Sigmoid colon (tissue), 7 donors: ENCODE measurements at regions of chr2 and their contacts with region 1.

Region 1: GRCh38 chr2:20490260-20491181 is 43.6 kb downstream of the RHOB start:
- DNase-seq: peak; percentile 94
- H3K4me3 ChIP-seq: no peak overlapping the region
- H3K27ac ChIP-seq: peak overlapping the region in 3 of 4 donors; percentile 72 to 84 (median 83)
- H3K4me1 ChIP-seq: peaks cover 4 to 56% (median 44%) of the 10 kb centered on the region in 4 donors
- H3K27me3 ChIP-seq: no peaks in the 10 kb centered on the region
- CTCF ChIP-seq: no peak
- EP300 ChIP-seq: peak; percentile 83 to 95 (median 90)
- POLR2A ChIP-seq: no peak

Region 2: DNA sequence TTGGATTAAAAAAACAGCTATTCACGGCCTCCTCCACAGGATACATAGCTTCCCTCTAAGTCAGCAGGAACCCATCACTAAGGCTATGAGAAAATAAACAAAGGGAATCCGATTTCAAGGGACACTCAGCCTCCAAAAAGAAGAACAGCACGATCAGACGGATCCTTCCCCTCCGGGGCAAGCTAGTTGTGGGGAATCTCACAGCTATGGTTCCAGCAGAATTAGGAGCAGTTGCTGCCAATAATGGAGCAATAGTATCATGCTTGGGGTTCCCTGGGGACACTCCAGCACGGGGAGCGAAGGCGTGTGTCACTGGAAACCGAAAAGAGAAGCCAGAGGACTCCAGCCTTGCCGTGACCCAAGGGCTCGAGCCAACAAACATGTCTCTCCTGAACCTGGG is 751.8 kb before region 1 on chr2:
- intact Hi-C with region 1: no loop called
- DNase-seq: peak; percentile 87
- H3K4me3 ChIP-seq: no peak overlapping the region
- H3K27ac ChIP-seq: peak overlapping the region; percentile 35 to 59 (median 44)
- H3K4me1 ChIP-seq: peaks cover 0 to 17% (median 11%) of the 10 kb centered on the region in 4 donors
- H3K27me3 ChIP-seq: no peaks in the 10 kb centered on the region
- CTCF ChIP-seq: no peak
- EP300 ChIP-seq: no peak
- POLR2A ChIP-seq: no peak

Region 3: DNA sequence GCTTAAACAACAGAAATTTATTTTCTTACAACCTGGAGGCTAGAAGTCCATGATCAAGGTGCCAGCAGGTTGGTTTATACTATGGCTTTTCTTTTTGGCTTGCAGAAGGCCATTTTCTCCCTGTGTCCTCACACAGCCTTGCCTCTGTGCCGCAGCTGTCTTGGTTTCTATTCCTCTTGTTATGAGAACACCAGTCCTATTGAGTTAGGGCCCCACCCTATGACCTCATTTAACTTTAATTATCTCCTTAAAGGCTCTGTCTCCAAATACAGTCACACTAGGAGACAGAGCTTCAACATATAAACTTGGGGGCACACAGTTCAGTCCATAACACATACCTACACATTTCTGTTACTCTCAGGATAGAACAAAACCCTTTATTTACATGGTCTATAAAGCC is 61.0 kb before region 1 on chr2:
- intact Hi-C with region 1: no loop called
- DNase-seq: no peak
- H3K4me3 ChIP-seq: no peak overlapping the region
- H3K27ac ChIP-seq: peak overlapping the region; percentile 40 to 56 (median 50)
- H3K4me1 ChIP-seq: peaks cover 0 to 27% (median 23%) of the 10 kb centered on the region in 4 donors
- H3K27me3 ChIP-seq: no peaks in the 10 kb centered on the region
- CTCF ChIP-seq: no peak
- EP300 ChIP-seq: no peak
- POLR2A ChIP-seq: no peak

Region 4: GRCh38 chr2:20450204-20450999 is 40.1 kb before region 1 on chr2:
- intact Hi-C with region 1: loop called (anchors 2 kb)
- DNase-seq: peak; percentile 97
- H3K4me3 ChIP-seq: peak overlapping the region; percentile 61 to 100 (median 98)
- H3K27ac ChIP-seq: peak overlapping the region; percentile 93 to 98 (median 98)
- H3K4me1 ChIP-seq: peaks cover 0 to 36% (median 28%) of the 10 kb centered on the region in 4 donors
- H3K27me3 ChIP-seq: no peaks in the 10 kb centered on the region
- CTCF ChIP-seq: peak in 1 of 4 experiments; percentile 7
- EP300 ChIP-seq: peak in 3 of 4 donors; percentile 96 to 97 (median 97)
- POLR2A ChIP-seq: peak; percentile 57 to 60

Region 5: DNA sequence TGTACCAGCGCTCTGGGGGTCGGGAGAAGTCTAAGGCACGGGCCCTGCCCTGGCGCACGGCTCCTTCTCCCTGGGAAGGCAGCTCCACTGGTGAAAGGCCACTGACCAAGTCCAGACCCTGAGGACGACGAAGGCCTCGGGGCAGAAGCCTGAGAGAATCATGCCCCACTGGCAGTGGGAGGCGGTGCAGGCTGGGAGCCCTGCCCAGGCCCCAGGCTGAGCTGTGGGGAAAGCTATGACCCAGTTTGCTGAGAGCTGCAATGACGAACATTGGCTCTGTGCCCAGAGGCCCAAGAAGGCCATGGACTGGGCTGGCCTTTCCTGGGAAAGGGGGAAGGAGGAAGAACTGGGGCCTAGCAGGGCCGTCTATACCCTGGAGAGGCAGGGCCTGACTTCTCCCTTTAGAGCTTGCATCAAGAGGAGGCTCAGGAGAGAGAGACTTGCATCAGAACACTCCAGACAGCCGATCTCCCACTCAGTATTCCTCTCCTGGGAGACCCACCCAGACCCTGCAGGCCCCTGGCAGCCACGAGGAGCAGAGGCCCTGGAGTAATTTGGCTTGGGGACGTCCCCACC is 127.5 kb after region 1 on chr2:
- intact Hi-C with region 1: loop called (anchors 1 kb)
- DNase-seq: peak; percentile 100
- H3K4me3 ChIP-seq: no peak overlapping the region
- H3K27ac ChIP-seq: peak overlapping the region; percentile 96 to 98 (median 98)
- H3K4me1 ChIP-seq: peaks cover 0 to 94% (median 86%) of the 10 kb centered on the region in 4 donors
- H3K27me3 ChIP-seq: no peaks in the 10 kb centered on the region
- CTCF ChIP-seq: peak; percentile 69 to 82 (median 71)
- EP300 ChIP-seq: peak; percentile 94 to 99 (median 96)
- POLR2A ChIP-seq: peak; percentile 7 to 61